HCT116 (cell line): ENCODE measurements at regions of chr20 and their contacts with region 1.

Region 1: GRCh38 chr20:3276680-3277015 is 37.7 kb upstream of the SLC4A11 start:
- DNase-seq: peak; percentile 35
- ATAC-seq: peak; percentile 92
- H3K4me3 ChIP-seq: no peak overlapping the region
- H3K27ac ChIP-seq: no peak overlapping the region
- H3K4me1 ChIP-seq: no peaks in the 10 kb centered on the region
- H3K27me3 ChIP-seq: no peaks in the 10 kb centered on the region
- CTCF ChIP-seq: peak; percentile 48 to 65 (median 51)
- POLR2A ChIP-seq: no peak
- RAD21 ChIP-seq: peak; percentile 67

Region 2: DNA sequence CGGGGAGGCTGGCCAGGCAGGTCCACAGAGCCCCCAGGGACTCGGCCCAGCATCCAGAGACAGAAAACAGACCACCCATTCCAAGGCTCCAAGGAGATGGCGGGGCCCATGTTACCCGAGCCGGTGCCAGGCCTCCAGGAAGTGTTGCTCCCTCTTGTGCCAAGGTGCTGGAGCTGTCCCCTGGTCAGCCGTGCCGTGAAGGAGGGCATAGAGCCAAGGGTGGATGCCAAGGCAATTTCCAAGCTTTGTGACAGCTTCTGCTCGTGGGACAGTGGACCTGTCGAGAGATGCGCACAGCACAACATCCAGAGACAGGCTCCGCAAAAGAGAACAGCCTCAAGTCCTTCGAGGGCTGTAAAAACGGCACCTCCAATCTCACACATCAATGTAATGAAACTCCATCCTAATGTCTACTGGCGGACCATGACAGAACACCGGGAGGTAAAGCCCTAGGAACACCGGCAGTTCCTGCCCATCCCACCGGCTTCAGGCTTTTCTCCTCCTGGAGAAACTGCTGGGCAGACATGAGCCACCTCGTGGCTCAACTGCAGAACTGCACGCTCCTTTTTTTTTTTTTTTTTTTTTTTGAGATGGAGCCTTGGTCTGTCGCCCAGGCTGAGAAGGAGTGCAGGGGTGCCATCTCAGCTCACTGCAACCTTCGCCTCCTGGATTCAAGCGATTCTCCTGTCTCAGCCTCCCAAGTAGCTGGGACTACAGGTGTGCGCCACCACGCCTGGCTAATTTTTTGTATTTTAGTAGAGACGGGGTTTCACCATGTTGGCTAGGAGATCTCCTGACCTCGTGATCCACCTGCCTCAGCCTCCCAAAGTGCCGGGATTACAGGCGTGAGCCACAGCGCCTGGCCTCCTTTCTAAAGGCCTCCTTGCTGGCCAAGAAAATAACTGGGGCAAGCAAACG is 161.2 kb before region 1 on chr20:
- CTCF ChIA-PET with region 1: no interaction called
- POLR2A ChIA-PET with region 1: no interaction called
- RAD21 ChIA-PET with region 1: no interaction called
- intact Hi-C with region 1: loop called (anchors 5 kb)
- DNase-seq: peak; percentile 22
- ATAC-seq: peak; percentile 65; the same call in 1 of the 2 replicates
- H3K4me3 ChIP-seq: no peak overlapping the region
- H3K27ac ChIP-seq: no peak overlapping the region
- H3K4me1 ChIP-seq: peaks cover 0 to 8% of the 10 kb centered on the region in 2 experiments; a peak in 1 of 4 replicates
- H3K27me3 ChIP-seq: no peaks in the 10 kb centered on the region
- CTCF ChIP-seq: peak; percentile 61 to 80 (median 66); a peak in 5 of 6 replicates
- POLR2A ChIP-seq: no peak
- RAD21 ChIP-seq: peak; percentile 51

Region 3: GRCh38 chr20:3218307-3218988 is 58.2 kb before region 1 on chr20:
- CTCF ChIA-PET with region 1: interaction called, 5 read pairs
- POLR2A ChIA-PET with region 1: no interaction called
- RAD21 ChIA-PET with region 1: no interaction called
- intact Hi-C with region 1: loop called (anchors 1 kb)
- DNase-seq: no peak
- ATAC-seq: peak; percentile 96
- H3K4me3 ChIP-seq: no peak overlapping the region
- H3K27ac ChIP-seq: peak overlapping the region; percentile 29; the same call in 1 of the 2 replicates
- H3K4me1 ChIP-seq: peaks cover 6 to 9% of the 10 kb centered on the region in 2 experiments; a peak in 3 of 4 replicates
- H3K27me3 ChIP-seq: no peaks in the 10 kb centered on the region
- CTCF ChIP-seq: peak; percentile 75 to 95 (median 89)
- POLR2A ChIP-seq: no peak
- RAD21 ChIP-seq: peak; percentile 79